GM10248 (cell line): ENCODE measurements at regions of chr22 and their contacts with region 1.

Region 1: DNA sequence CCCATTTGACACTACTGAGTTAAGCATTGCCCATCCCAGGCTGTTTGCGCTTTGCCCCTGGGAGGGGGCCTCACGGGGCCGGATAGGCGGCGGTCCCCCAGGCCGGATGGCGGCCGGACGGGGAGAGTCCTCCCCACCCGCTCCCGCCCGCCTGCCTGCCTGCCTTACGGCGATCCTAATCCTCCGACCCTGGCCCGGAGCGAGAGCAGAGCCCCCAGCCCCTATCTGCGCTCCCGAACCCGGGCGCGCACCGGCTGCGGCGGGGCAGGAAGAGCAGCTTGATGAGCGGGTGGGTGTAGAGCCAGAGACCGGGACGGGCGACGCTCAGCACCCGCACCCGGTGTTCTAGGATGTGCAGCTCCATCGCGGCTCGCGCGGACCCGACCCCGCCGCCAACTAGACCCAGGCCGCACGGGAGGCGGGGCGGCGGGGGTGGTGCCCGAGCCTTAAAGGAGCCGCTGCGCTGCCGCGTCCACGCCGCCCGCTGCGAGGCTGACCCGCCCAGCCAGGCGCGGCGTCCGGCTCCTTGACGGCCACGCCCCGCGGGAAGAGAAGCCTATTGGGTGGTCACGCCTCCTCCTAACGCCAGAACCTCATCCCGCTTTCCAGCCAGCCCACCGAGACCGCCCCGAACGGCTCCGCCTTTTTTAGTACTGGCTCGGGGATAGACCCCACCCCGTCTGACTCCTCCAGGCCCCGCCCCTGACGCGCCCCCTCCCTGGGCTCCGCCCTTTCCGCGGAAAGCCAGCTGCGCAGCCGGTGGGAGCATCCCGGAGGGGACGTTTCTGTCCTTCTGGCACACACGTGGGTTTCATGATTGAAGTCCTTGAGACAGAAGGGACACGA is at the start of gene CASTOR1:
- DNase-seq: peak; percentile 98
- CTCF ChIP-seq: no peak

Region 2: GRCh38 chr22:30116362-30117117 is 172.8 kb before region 1 on chr22:
- CTCF ChIA-PET with region 1: interaction called, 17 read pairs
- POLR2A ChIA-PET with region 1: no interaction called
- DNase-seq: no peak
- CTCF ChIP-seq: no peak

Region 3: DNA sequence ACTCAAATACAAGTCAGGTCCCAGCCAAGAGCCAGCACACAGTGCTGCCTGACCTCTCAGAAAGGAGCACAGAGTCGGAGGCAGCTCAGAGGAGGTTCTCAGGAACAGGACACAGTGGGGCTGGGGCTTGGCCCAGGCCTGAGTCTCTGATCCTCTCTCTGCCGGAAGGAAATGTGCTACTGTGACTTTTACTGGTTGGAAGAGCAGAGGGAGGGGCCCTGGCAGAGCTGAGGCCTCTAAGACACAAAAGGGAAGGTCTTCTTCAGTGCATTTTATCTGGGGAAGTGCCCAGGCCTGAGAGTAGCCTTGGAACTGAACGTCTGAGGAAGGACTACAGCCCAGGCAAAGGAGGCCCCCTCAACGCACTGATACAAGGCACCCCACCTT is 16.2 kb after region 1 on chr22:
- CTCF ChIA-PET with region 1: interaction called, 268 read pairs
- POLR2A ChIA-PET with region 1: no interaction called
- DNase-seq: peak; percentile 69
- CTCF ChIP-seq: no peak

Region 4: DNA sequence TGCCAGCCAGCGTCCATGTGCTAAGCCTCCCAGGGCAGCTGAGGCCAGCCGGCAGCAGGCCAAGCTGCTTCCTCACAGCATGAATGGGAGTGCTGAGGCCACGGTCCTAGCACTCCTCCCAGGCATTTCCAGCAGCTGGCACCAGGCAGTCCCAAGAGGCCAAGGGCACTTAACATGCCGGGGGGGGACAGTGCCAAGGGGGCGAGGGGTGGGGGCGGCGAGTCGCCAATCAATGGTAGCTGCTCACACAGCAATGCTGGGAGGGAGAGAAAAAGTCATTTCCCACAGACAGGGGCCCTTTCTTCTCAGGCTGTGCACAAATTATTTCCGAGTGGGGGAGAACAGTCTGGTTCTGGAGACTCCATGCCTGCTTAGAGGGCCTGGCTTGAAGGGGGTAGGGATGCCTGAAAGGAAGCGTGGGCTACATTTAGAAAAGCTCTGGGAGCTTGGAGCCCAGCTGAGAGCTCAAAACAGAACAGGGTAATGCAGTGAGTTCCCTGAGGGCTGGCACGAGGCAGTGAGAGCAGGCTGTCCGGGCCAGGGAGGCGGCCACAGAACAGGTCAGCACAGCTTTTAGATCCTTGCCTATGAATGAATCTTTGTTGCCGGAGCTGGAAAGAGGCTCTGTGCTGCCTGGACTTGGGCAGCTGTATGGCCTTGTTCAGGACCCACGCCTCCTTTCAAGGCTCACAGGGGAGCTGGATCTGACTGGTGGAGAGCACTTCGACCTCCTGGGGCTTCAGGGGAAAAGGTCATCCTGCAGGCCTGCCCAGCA is 51.7 kb after region 1 on chr22:
- CTCF ChIA-PET with region 1: interaction called, 12 read pairs
- POLR2A ChIA-PET with region 1: no interaction called
- DNase-seq: no peak
- CTCF ChIP-seq: no peak

Region 5: GRCh38 chr22:30368431-30368830 is 79.1 kb after region 1 on chr22:
- CTCF ChIA-PET with region 1: interaction called, 19 read pairs
- POLR2A ChIA-PET with region 1: no interaction called
- DNase-seq: no peak
- CTCF ChIP-seq: no peak

Region 6: GRCh38 chr22:30396871-30397655 is 107.7 kb after region 1 on chr22 and contains the start of gene SEC14L2:
- CTCF ChIA-PET with region 1: interaction called, 307 read pairs
- POLR2A ChIA-PET with region 1: no interaction called
- DNase-seq: peak; percentile 50
- CTCF ChIP-seq: no peak

Region 7: GRCh38 chr22:30423982-30424963 is 134.9 kb after region 1 on chr22:
- CTCF ChIA-PET with region 1: interaction called, 19 read pairs
- POLR2A ChIA-PET with region 1: no interaction called
- DNase-seq: peak; percentile 98
- CTCF ChIP-seq: no peak